ENCODE measurements at regions of chr17 and their contacts with region 1.

Region 1: DNA sequence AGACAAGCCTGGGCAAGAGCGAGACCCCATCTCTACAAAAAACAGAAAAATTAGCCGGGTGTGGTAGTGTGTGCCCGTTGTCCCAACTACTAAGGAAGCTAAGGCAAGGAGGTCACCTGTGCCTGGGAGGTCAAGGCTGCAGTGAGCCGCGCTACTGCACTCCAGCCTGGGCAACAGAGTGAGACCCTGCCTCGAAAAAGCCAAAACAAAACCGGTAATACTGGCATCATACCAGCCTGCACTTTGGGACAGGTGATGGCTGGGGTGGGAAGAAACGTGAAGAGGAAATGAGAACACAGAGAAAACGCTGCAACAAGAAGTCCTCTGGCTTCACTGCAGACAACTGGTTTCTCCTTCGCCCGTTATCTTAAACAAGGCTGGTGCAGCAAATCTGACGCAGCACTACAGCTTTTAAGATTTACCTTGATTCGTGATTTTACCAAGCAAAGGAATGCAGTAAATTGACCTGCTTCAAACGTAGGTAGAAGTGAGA is 725 bp upstream of the CASC3 start:
- DNase-seq: no peak
- H3K4me3 ChIP-seq: peak overlapping the region; percentile 25 to 62
- H3K4me3 Mint-ChIP-seq: peak overlapping the region; percentile 91 to 98 (median 96)
- H3K27ac ChIP-seq: peak overlapping the region; percentile 97
- H3K27ac Mint-ChIP-seq: peak overlapping the region; percentile 98 to 100 (median 99)
- H3K4me1 ChIP-seq: peaks cover 28% of the 10 kb centered on the region
- H3K4me1 Mint-ChIP-seq: peaks cover 23 to 49% (median 31%) of the 10 kb centered on the region in 4 donors
- H3K27me3 ChIP-seq: no peaks in the 10 kb centered on the region
- H3K27me3 Mint-ChIP-seq: no peaks in the 10 kb centered on the region

Region 2: DNA sequence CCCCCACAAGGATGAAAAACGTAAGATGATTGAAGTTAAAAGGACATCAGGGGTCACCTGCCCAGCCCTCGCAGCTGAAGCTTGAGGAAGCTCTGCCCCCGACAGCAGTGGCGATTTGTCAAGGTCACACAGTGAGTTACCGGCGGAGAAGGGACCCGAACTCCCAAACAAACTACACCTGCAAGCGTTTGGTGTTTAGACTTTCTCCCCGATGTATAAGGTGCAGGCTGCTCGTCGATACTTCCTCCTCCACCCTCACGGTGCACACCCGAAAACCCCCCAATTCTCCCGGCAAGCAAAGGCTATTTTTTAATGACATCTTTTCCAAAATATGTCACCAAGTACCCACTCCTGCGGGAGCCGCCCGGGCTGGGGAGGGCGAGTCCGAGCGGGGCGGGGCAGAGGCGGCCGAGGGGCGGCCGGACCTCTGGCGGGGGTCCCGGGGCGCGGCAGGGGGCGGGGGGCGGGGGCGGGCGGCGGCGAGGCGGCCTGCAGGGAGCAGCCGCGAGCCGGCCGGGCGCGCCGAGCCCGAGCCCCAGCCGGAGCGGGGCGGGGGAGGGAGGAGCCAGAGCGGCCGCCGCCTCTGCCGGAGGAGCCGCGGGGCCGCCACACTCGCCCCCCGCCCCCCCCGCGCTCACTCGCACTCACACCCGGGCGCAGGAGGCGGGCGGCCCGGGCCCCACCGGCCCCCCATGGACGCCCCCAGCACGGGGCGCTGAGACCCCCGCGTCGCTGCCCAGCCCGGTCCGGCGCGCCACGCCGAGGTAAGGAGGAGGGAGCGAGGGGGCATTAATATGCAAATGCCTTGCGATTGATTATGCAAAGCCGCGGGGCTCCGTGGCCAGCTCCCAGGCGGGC is 77.1 kb before region 1 on chr17 and contains the start of gene THRA:
- CTCF ChIA-PET with region 1: no interaction called
- POLR2A ChIA-PET with region 1: interaction called, 11 read pairs
- intact Hi-C with region 1: no loop called
- DNase-seq: peak; percentile 71 to 75 (median 73)
- H3K4me3 ChIP-seq: peak within 1 kb of the TSS; percentile 57 to 70
- H3K4me3 Mint-ChIP-seq: peak within 1 kb of the TSS; percentile 90 to 96 (median 94)
- H3K27ac ChIP-seq: peak within 1 kb of the TSS; percentile 70
- H3K27ac Mint-ChIP-seq: peak within 1 kb of the TSS; percentile 81 to 96 (median 91)
- H3K4me1 ChIP-seq: peaks cover 49% of the 10 kb centered on the region
- H3K4me1 Mint-ChIP-seq: peaks cover 33 to 53% (median 42%) of the 10 kb centered on the region in 4 donors
- H3K27me3 ChIP-seq: peaks cover 3% of the 10 kb centered on the region
- H3K27me3 Mint-ChIP-seq: peaks cover 1% of the 10 kb centered on the region in 2 donors
- total RNA-seq, gene THRA: 35.9 to 41.3 TPM

Region 3: DNA sequence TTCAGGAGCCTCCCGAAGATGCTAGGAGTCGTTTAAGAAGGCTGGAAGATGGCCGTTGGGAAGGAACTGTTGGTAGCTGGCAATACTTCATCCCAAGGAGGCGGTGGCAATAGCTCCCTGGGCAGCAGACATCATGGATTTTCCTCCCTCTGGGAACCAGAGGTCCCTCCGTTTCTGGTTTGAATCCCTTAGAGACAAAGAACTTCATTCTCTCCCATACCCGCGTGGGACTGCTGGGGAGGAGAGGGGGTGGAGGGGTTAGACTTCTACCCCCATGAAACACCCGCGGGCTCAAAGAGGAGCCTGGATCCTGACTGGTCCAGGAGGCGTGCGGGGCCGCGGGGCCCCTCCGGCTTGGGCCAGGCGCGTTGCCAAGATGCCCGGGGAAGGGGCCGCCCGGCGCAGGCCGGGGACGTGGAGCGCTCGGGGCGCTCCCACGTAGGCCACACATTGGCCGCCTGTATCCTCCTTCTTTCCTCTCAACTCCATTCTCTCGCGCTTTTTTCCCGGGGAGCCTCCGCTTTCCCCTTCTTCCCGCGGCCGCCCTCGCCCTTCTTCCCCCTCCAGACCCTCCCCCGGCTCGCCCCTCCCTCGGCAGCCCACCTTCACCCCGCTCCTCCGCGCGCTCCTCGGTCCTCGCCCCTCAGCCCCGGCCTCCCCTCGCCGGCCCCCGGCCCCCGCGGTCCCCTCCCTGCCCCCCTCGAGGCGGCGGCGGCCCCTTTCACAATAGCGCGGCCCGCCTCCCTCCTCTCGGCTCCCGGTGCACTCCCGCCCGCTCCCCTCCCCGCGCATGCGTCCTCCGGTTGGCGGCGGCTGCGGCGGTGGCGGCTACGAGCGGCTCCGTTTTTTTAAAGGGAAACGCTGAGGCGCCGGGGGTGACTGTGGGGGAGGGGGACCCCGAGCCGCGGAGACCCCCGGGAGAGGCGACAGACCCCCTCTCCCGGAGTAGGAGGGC is 18.2 kb before region 1 on chr17 and contains the start of gene MSL1:
- CTCF ChIA-PET with region 1: interaction called, 25 read pairs
- POLR2A ChIA-PET with region 1: interaction called, 178 read pairs
- intact Hi-C with region 1: loop called (anchors 1 kb)
- DNase-seq: peak; percentile 82 to 91 (median 85)
- H3K4me3 ChIP-seq: peak within 1 kb of the TSS; percentile 86 to 98
- H3K4me3 Mint-ChIP-seq: peak within 1 kb of the TSS; percentile 76 to 96 (median 84)
- H3K27ac ChIP-seq: peak within 1 kb of the TSS; percentile 78
- H3K27ac Mint-ChIP-seq: peak within 1 kb of the TSS; percentile 78 to 92 (median 83)
- H3K4me1 ChIP-seq: peaks cover 35% of the 10 kb centered on the region
- H3K4me1 Mint-ChIP-seq: peaks cover 17 to 47% (median 31%) of the 10 kb centered on the region in 4 donors
- H3K27me3 ChIP-seq: no peaks in the 10 kb centered on the region
- H3K27me3 Mint-ChIP-seq: no peaks in the 10 kb centered on the region
- total RNA-seq, gene MSL1: 130 to 133 TPM

Region 4: GRCh38 chr17:40151414-40151963 is 11.9 kb after region 1 on chr17:
- CTCF ChIA-PET with region 1: interaction called, 12 read pairs
- POLR2A ChIA-PET with region 1: interaction called, 28 read pairs
- intact Hi-C with region 1: no loop called
- DNase-seq: no peak
- H3K4me3 ChIP-seq: no peak overlapping the region
- H3K4me3 Mint-ChIP-seq: no peak overlapping the region
- H3K27ac ChIP-seq: no peak overlapping the region
- H3K27ac Mint-ChIP-seq: peak overlapping the region in 2 of 7 donors; percentile 43 to 76
- H3K4me1 ChIP-seq: peaks cover 31% of the 10 kb centered on the region
- H3K4me1 Mint-ChIP-seq: peaks cover 35 to 59% (median 45%) of the 10 kb centered on the region in 4 donors
- H3K27me3 ChIP-seq: no peaks in the 10 kb centered on the region
- H3K27me3 Mint-ChIP-seq: no peaks in the 10 kb centered on the region

Region 5: GRCh38 chr17:40157973-40158372 is 18.4 kb after region 1 on chr17:
- CTCF ChIA-PET with region 1: interaction called, 5 read pairs
- POLR2A ChIA-PET with region 1: interaction called, 28 read pairs
- intact Hi-C with region 1: no loop called
- DNase-seq: no peak
- H3K4me3 ChIP-seq: no peak overlapping the region
- H3K4me3 Mint-ChIP-seq: no peak overlapping the region
- H3K27ac ChIP-seq: no peak overlapping the region
- H3K27ac Mint-ChIP-seq: peak overlapping the region; percentile 4 to 85 (median 71)
- H3K4me1 ChIP-seq: peaks cover 5% of the 10 kb centered on the region
- H3K4me1 Mint-ChIP-seq: peaks cover 11 to 39% (median 28%) of the 10 kb centered on the region in 4 donors
- H3K27me3 ChIP-seq: no peaks in the 10 kb centered on the region
- H3K27me3 Mint-ChIP-seq: no peaks in the 10 kb centered on the region

Region 6: GRCh38 chr17:40219073-40219860 is 79.7 kb after region 1 on chr17 and contains the start of gene WIPF2:
- CTCF ChIA-PET with region 1: no interaction called
- POLR2A ChIA-PET with region 1: interaction called, 14 read pairs
- intact Hi-C with region 1: no loop called
- DNase-seq: peak; percentile 94 to 97 (median 95)
- H3K4me3 ChIP-seq: peak within 1 kb of the TSS; percentile 59 to 71
- H3K4me3 Mint-ChIP-seq: peak within 1 kb of the TSS; percentile 92 to 100 (median 98)
- H3K27ac ChIP-seq: peak within 1 kb of the TSS; percentile 96
- H3K27ac Mint-ChIP-seq: peak within 1 kb of the TSS; percentile 93 to 100 (median 100)
- H3K4me1 ChIP-seq: peaks cover 26% of the 10 kb centered on the region
- H3K4me1 Mint-ChIP-seq: peaks cover 23 to 49% (median 33%) of the 10 kb centered on the region in 4 donors
- H3K27me3 ChIP-seq: no peaks in the 10 kb centered on the region
- H3K27me3 Mint-ChIP-seq: no peaks in the 10 kb centered on the region
- total RNA-seq, gene WIPF2: 34.4 to 34.7 TPM